ENCODE measurements at regions of chr13 and their contacts with region 1.

Region 1: GRCh38 chr13:112873851-112874750 is 94.9 kb upstream of the MCF2L start:
- DNase-seq: peak; percentile 41
- H3K4me3 ChIP-seq: no peak overlapping the region
- H3K27ac ChIP-seq: no peak overlapping the region
- H3K4me1 ChIP-seq: peaks cover 4% of the 10 kb centered on the region
- H3K27me3 ChIP-seq: no peaks in the 10 kb centered on the region
- CTCF ChIP-seq: peak; percentile 83 to 92

Region 2: GRCh38 chr13:112616586-112617362 is 257.3 kb before region 1 on chr13:
- CTCF ChIA-PET with region 1: no interaction called
- dilution Hi-C with region 1: no loop called
- in situ Hi-C with region 1: no loop called
- intact Hi-C with region 1: loop called (anchors 1 kb)
- DNase-seq: peak; percentile 33
- H3K4me3 ChIP-seq: no peak overlapping the region
- H3K27ac ChIP-seq: no peak overlapping the region
- H3K4me1 ChIP-seq: no peaks in the 10 kb centered on the region
- H3K27me3 ChIP-seq: no peaks in the 10 kb centered on the region
- CTCF ChIP-seq: peak; percentile 47 to 65

Region 3: DNA sequence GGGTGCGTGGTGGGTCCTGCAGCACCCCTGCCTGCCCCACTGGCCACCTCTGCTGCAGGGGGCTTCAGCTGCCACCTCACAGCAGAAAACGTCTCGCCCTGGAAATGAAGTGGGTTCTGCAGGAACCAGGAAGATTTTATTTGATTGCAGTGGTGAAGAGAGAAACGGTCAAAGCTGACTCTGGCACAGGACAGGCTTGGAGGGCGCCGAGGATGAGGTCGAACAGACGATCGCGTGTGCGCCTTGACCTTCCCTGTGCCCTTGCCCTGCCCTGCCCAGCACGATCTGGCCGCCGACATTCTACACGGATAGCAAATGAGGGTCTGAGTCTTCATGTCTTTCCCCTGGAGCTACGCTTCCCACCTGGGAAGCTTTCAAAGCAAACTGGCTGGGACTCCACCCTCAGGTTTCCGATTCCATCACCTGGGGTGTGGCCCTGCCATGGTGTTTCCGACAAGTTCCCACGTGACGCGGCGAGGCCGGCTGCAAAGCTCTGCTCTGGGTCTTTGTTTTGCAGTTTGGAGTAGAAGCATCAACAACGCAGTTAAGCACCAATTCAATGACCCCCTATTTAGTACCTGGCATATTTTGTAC is 235.8 kb before region 1 on chr13:
- CTCF ChIA-PET with region 1: no interaction called
- dilution Hi-C with region 1: no loop called
- in situ Hi-C with region 1: loop called in 1 of 2 experiments (anchors 25 kb)
- intact Hi-C with region 1: loop called (anchors 1 kb)
- DNase-seq: no peak
- H3K4me3 ChIP-seq: no peak overlapping the region
- H3K27ac ChIP-seq: no peak overlapping the region
- H3K4me1 ChIP-seq: peaks cover 8% of the 10 kb centered on the region
- H3K27me3 ChIP-seq: peaks cover 21% of the 10 kb centered on the region
- CTCF ChIP-seq: no peak

Region 4: GRCh38 chr13:112689303-112690165 is 184.6 kb before region 1 on chr13 and contains the start of gene ATP11A:
- CTCF ChIA-PET with region 1: no interaction called
- dilution Hi-C with region 1: no loop called
- in situ Hi-C with region 1: no loop called
- intact Hi-C with region 1: loop called (anchors 1 kb)
- DNase-seq: peak; percentile 86
- H3K4me3 ChIP-seq: peak within 1 kb of the TSS; percentile 73 to 92 (median 75)
- H3K27ac ChIP-seq: peak within 1 kb of the TSS; percentile 51
- H3K4me1 ChIP-seq: peaks cover 9% of the 10 kb centered on the region
- H3K27me3 ChIP-seq: no peaks in the 10 kb centered on the region
- CTCF ChIP-seq: no peak
- total RNA-seq, gene ATP11A: 13.2 to 36.9 TPM

Region 5: GRCh38 chr13:112767506-112768471 is 106.3 kb before region 1 on chr13:
- CTCF ChIA-PET with region 1: no interaction called
- dilution Hi-C with region 1: loop called (anchors 5 kb)
- in situ Hi-C with region 1: no loop called
- intact Hi-C with region 1: no loop called
- DNase-seq: no peak
- H3K4me3 ChIP-seq: no peak overlapping the region
- H3K27ac ChIP-seq: no peak overlapping the region
- H3K4me1 ChIP-seq: no peaks in the 10 kb centered on the region
- H3K27me3 ChIP-seq: no peaks in the 10 kb centered on the region
- CTCF ChIP-seq: no peak

Region 6: DNA sequence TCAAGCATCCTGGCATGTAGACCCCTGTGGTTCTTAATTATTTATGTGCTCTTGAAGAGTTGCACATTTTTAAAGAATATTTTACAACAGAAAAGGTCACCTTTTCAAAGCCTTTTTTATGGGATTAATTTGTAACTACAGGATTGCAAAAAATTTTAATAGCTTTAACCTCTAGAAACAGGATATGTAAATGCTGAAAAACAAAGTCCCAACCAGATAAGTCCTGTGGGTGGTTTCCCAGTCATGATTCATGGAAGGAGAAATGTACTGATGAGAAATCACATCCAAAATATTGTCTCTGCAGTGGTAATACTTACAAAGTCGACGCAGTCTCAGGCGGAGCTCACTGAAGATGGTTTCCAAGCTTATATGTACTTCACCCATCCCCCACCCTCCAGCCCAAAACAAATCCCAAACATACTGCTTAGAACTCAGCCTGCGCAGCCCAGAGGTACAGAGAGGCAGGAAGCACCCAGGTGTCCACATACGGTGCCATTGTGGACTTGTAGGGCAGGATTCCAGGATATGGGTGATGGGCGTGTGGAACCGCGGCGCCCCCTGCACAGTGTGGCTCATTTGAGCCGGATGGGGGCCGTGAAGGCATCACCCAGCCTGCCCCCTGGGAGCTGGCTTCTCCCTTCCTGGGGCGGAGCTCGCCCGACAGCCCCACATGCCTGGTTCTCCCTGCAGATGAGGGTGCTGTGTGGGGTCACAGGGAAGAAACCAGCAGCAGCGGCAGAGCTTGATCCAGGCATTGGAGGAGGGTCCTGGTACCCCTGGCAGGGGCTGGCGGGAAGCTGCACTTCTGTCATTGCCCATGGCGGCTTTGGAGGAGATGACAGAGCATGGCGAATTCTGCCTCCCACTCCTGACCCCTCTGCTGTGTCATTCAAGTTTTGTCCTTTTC is 83.1 kb before region 1 on chr13:
- CTCF ChIA-PET with region 1: no interaction called
- dilution Hi-C with region 1: loop called (anchors 5 kb)
- in situ Hi-C with region 1: no loop called
- intact Hi-C with region 1: no loop called
- DNase-seq: no peak
- H3K4me3 ChIP-seq: no peak overlapping the region
- H3K27ac ChIP-seq: no peak overlapping the region
- H3K4me1 ChIP-seq: no peaks in the 10 kb centered on the region
- H3K27me3 ChIP-seq: no peaks in the 10 kb centered on the region
- CTCF ChIP-seq: no peak